GM18951 (cell line): ENCODE measurements at regions of chr14 and their contacts with region 1.

Region 1: GRCh38 chr14:64349741-64350490 is 38.2 kb upstream of the MTHFD1 start:
- POLR2A ChIP-seq: no peak

Region 2: DNA sequence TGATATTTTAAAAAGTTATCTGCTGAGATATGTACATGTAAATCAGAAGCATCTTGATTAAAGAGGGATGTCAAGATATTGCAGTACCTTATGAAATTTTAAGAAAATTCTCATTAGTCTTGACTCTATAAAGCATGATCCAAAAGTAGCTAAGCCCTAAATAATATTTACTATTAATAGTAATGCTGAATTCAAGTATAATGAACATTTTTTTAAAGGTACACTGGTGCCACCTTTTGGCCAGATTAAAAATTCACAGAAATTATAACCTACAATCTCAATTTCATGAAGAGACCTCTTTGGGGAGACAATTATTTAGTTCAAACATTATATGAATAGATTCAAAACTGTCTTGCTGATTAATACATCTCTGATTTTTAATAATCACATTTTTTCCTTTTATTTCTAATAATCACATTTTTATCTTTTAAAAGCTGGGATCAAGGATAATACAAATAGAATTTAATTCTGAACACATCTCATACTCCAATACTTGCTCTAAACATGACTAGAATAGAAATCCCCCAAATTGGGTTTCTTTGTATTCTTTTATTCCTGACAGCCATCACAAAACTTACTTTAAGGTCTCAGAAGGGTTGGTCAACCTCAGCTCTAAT is 128.8 kb after region 1 on chr14:
- in situ Hi-C with region 1: loop called (anchors 5 kb)
- POLR2A ChIP-seq: no peak

Region 3: GRCh38 chr14:64636208-64636979 is 286.5 kb after region 1 on chr14:
- in situ Hi-C with region 1: loop called (anchors 5 kb)
- POLR2A ChIP-seq: no peak